ENCODE measurements at regions of chr17 and their contacts with region 1.

Region 1: GRCh38 chr17:17836250-17836817 is 452 bp downstream of the SREBF1 start:
- DNase-seq: peak; percentile 88 to 99
- H3K4me3 ChIP-seq: peak overlapping the region; percentile 61
- H3K27ac ChIP-seq: peak overlapping the region; percentile 99
- H3K4me1 ChIP-seq: peaks cover 65% of the 10 kb centered on the region
- H3K27me3 ChIP-seq: no peaks in the 10 kb centered on the region
- CTCF ChIP-seq: no peak; the same call in 1 of the 2 replicates

Region 2: DNA sequence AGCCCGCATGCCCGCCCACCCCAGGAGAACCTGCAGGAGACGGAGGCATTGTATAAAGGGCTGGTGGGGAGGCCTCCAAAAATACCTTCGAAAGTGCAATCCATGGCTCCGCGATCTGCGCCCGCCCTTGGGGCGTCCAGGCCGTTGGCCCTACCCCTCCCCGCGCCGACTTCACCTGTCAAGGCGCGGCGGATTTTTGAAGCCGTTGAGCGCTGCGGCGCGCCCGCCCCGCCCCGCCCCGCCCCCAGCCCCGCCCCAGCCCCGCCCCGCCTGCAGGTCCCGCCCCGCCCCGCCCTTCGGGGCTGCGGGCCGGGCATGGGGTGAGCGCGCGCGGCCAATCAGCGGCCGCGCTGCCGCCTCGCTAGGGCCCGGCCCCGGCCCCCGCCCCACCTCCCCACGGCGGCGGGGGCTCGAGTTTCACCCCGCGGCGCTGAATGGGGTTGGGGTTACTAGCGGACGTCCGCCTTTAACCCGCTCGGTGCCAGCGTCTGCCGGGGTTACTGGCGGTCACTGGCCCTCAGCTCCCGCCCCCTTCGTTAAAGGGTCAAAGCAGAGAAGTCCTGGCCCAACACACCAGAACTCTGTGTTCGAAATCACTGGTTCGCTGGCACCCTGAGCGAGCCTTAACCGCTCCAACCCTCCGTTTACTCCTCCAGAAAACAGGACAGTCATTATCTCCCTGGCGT is 12.8 kb before region 1 on chr17:
- CTCF ChIA-PET with region 1: interaction called, 6 read pairs
- POLR2A ChIA-PET with region 1: interaction called, 37 read pairs
- intact Hi-C with region 1: loop called (anchors 1 kb)
- DNase-seq: peak; percentile 78 to 96
- H3K4me3 ChIP-seq: peak overlapping the region; percentile 52
- H3K27ac ChIP-seq: peak overlapping the region; percentile 95
- H3K4me1 ChIP-seq: peaks cover 97% of the 10 kb centered on the region
- H3K27me3 ChIP-seq: no peaks in the 10 kb centered on the region
- CTCF ChIP-seq: no peak

Region 3: DNA sequence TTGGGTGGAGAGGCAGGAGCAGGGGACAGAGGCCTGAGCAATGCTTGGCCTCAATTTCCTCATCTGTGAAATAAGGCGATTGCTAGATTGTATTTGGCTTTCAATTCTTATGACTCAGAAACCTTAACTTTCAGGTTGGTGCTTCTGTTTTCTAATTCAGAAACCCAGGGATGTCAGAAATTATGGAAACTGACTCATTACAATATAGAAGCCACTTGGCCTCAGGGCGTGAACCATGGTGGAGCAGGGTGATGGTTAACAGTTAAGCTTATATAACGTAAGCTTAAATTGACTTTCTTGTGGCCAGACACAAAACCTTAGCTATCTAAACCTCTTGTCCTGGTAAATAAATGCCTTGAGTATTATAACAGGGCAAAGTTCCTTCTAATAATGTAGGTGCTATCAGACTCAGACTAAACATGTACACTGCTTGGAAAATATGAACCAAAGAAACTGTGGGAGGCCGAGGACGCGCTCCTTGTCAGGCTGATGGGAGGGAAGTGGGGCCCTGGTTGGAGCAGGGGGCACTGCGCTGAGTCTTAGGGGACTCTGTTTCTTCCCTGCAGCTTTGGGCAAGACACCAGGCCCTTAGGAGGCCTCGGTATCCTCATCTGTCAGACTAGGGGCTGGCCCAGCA is 17.6 kb after region 1 on chr17:
- CTCF ChIA-PET with region 1: interaction called, 9 read pairs
- POLR2A ChIA-PET with region 1: interaction called, 12 read pairs
- intact Hi-C with region 1: no loop called
- DNase-seq: peak in 1 of 2 experiments; percentile 84
- H3K4me3 ChIP-seq: no peak overlapping the region
- H3K27ac ChIP-seq: peak overlapping the region; percentile 86
- H3K4me1 ChIP-seq: peaks cover 58% of the 10 kb centered on the region
- H3K27me3 ChIP-seq: no peaks in the 10 kb centered on the region
- CTCF ChIP-seq: no peak

Region 4: GRCh38 chr17:18033442-18034099 is 197.2 kb after region 1 on chr17:
- CTCF ChIA-PET with region 1: interaction called, 5 read pairs
- POLR2A ChIA-PET with region 1: interaction called, 20 read pairs
- intact Hi-C with region 1: no loop called
- DNase-seq: peak; percentile 54 to 82
- H3K4me3 ChIP-seq: no peak overlapping the region
- H3K27ac ChIP-seq: no peak overlapping the region
- H3K4me1 ChIP-seq: peaks cover 30% of the 10 kb centered on the region
- H3K27me3 ChIP-seq: no peaks in the 10 kb centered on the region
- CTCF ChIP-seq: peak; percentile 89

Region 5: DNA sequence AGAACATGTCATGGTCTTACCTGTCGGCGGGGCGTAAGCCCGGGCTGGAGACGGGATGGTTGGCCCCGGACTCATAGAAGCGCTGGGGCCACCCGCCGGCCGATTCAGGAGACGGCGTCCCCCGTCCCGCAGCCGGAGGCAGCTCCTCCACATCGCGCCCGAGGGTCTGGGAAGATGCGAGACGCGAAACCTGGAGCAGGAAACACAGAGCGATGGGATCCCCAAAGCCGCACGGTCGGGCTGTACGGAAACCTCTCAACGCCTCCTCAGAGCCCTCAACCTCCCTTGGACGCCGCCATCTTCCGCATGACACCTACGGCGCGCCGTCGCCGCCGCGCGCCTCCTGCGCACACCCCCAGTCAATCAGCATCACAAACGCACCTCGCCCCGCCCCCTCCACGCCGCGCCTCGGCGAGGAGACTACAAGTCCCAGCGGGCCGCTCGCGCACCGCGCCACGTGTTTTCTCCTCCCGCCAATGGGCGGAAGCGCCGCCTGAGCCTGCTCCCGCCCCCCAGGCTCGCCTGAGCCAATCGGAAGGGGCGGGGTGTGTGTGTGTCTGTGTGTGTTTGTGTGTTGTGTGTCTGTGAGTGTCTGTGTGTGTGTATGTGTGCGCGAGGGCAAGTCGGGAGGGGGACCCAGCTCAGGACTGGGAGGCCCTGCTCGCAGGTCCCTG is 202.7 kb after region 1 on chr17 and contains the starts of genes ATPAF2 and GID4:
- CTCF ChIA-PET with region 1: no interaction called
- POLR2A ChIA-PET with region 1: interaction called, 4 read pairs
- intact Hi-C with region 1: loop called (anchors 1 kb)
- DNase-seq: peak; percentile 94 to 100
- H3K4me3 ChIP-seq: peak within 1 kb of the TSS; percentile 92
- H3K27ac ChIP-seq: no peak within 1 kb of the TSS
- H3K4me1 ChIP-seq: peaks cover 36% of the 10 kb centered on the region
- H3K27me3 ChIP-seq: no peaks in the 10 kb centered on the region
- CTCF ChIP-seq: no peak
- total RNA-seq, gene ATPAF2: 44.5 and 61.7 TPM in 2 replicates
- total RNA-seq, gene GID4: 16.9 and 19.0 TPM in 2 replicates

Measured in PC-9 (cell line).